OCI-LY7 (cell line): ENCODE measurements at regions of chr11 and their contacts with region 1.

Region 1: GRCh38 chr11:66344550-66345315 is at the start of gene BRMS1:
- DNase-seq: peak; percentile 96
- H3K4me3 ChIP-seq: peak within 1 kb of the TSS; percentile 88
- H3K27ac ChIP-seq: peak within 1 kb of the TSS; percentile 35
- H3K4me1 ChIP-seq: peaks cover 37% of the 10 kb centered on the region
- CTCF ChIP-seq: no peak
- total RNA-seq, gene BRMS1: 43.8 and 56.2 TPM in 2 replicates

Region 2: GRCh38 chr11:66371627-66372415 is 27.1 kb after region 1 on chr11 and contains the start of gene SLC29A2:
- CTCF ChIA-PET with region 1: no interaction called
- POLR2A ChIA-PET with region 1: interaction called, 5 read pairs
- intact Hi-C with region 1: loop called (anchors 2 kb)
- DNase-seq: peak; percentile 95
- H3K4me3 ChIP-seq: peak within 1 kb of the TSS; percentile 82
- H3K27ac ChIP-seq: peak within 1 kb of the TSS; percentile 86
- H3K4me1 ChIP-seq: peaks cover 22% of the 10 kb centered on the region
- CTCF ChIP-seq: no peak; the same call in 1 of the 2 replicates
- total RNA-seq, gene SLC29A2: 24.7 and 33.6 TPM in 2 replicates